Right lobe of liver (tissue), 6 donors: ENCODE measurements at regions of chr1 and their contacts with region 1.

Region 1: GRCh38 chr1:155127105-155127964 is at the start of gene EFNA1:
- DNase-seq: peak; percentile 89 to 94 (median 92)
- ATAC-seq: peak; percentile 31 to 55 (median 48)
- H3K4me3 ChIP-seq: peak within 1 kb of the TSS; percentile 84 to 96 (median 95)
- H3K27ac ChIP-seq: peak within 1 kb of the TSS; percentile 97 to 100 (median 99)
- H3K4me1 ChIP-seq: peaks cover 0 to 39% (median 12%) of the 10 kb centered on the region in 4 donors
- H3K27me3 ChIP-seq: no peaks in the 10 kb centered on the region
- CTCF ChIP-seq: no peak
- POLR2A ChIP-seq: peak; percentile 93
- total RNA-seq, gene EFNA1: 87.5 to 419 (median 196) TPM

Region 2: GRCh38 chr1:155105604-155106022 is 21.7 kb before region 1 on chr1:
- intact Hi-C with region 1: loop called in 1 of 2 experiments (anchors 2 kb)
- DNase-seq: peak; percentile 82 to 95 (median 90)
- ATAC-seq: peak; percentile 47 to 75 (median 66)
- H3K4me3 ChIP-seq: no peak overlapping the region
- H3K27ac ChIP-seq: peak overlapping the region; percentile 97 to 100 (median 99)
- H3K4me1 ChIP-seq: peaks cover 0 to 61% (median 29%) of the 10 kb centered on the region in 4 donors
- H3K27me3 ChIP-seq: no peaks in the 10 kb centered on the region
- CTCF ChIP-seq: no peak
- POLR2A ChIP-seq: peak; percentile 60